H1 (cell line): ENCODE measurements at regions of chr2 and their contacts with region 1.

Region 1: GRCh38 chr2:200811336-200812121 is at the start of gene BZW1:
- DNase-seq: peak; percentile 90 to 95
- H3K4me3 ChIP-seq: peak within 1 kb of the TSS; percentile 86 to 99 (median 96)
- H3K27ac ChIP-seq: peak within 1 kb of the TSS; percentile 100
- H3K4me1 ChIP-seq: peaks cover 2 to 9% (median 5%) of the 10 kb centered on the region in 4 experiments; a peak in 6 of 7 replicates
- H3K27me3 ChIP-seq: no peaks in the 10 kb centered on the region
- CTCF ChIP-seq: no peak
- EP300 ChIP-seq: peak in 1 of 2 experiments; percentile 98; a peak in 2 of 3 replicates
- POLR2A ChIP-seq: peak; percentile 94 to 97
- RAD21 ChIP-seq: peak in 1 of 2 experiments; percentile 17; a peak in 1 of 4 replicates
- total RNA-seq, gene BZW1: 335 and 340 TPM in 2 replicates

Region 2: DNA sequence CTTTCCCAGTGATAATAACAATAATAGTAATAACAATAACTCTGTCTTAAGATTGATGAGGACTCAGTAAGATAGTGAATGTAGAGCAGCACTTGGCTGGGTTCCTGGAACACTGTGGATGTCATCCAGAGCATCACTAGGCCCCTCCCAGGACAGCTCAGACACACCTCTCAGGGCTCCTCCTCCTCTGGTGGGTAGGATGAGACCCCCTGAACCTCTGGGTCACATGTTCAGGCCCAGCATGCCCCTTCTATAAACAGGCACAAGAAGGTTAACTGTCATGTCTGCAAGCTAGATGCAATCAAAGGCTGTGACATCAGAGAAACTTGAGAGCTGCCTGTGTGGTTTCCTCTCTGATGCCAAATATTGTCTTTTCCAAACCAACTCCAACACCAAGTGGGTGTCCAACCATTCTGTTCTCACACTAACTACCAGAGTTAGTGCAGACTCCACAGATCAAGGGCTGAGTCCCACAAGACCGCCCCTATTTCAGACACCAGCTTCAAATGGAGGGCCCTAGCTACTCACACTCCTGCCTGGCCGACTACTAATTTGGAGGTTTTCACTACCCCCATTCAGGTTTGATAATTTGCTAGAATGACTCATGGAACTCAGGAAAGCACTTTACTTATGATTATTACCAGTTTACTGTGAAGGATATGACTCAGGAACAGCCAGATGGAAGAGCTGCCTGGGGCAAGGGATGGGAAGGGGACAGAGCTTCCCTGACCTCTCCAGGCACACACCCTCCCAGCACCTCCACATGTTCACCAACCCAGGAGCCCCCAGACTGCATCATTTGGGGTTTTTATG is 46.2 kb before region 1 on chr2:
- CTCF ChIA-PET with region 1: no interaction called
- POLR2A ChIA-PET with region 1: no interaction called
- DNase-seq: no peak
- H3K4me3 ChIP-seq: no peak overlapping the region
- H3K27ac ChIP-seq: no peak overlapping the region
- H3K4me1 ChIP-seq: no peaks in the 10 kb centered on the region
- H3K27me3 ChIP-seq: no peaks in the 10 kb centered on the region
- CTCF ChIP-seq: no peak
- EP300 ChIP-seq: no peak
- POLR2A ChIP-seq: no peak
- RAD21 ChIP-seq: no peak

Region 3: GRCh38 chr2:200829258-200829655 is 17.7 kb after region 1 on chr2:
- CTCF ChIA-PET with region 1: no interaction called
- POLR2A ChIA-PET with region 1: interaction called, 11 read pairs
- DNase-seq: no peak
- H3K4me3 ChIP-seq: no peak overlapping the region
- H3K27ac ChIP-seq: no peak overlapping the region
- H3K4me1 ChIP-seq: no peaks in the 10 kb centered on the region
- H3K27me3 ChIP-seq: no peaks in the 10 kb centered on the region
- CTCF ChIP-seq: no peak
- EP300 ChIP-seq: no peak
- POLR2A ChIP-seq: 0 out of 3 replicates have a peak, but pooled peaks of 1 of the 2 experiments have one; percentile 7
- RAD21 ChIP-seq: no peak

Region 4: DNA sequence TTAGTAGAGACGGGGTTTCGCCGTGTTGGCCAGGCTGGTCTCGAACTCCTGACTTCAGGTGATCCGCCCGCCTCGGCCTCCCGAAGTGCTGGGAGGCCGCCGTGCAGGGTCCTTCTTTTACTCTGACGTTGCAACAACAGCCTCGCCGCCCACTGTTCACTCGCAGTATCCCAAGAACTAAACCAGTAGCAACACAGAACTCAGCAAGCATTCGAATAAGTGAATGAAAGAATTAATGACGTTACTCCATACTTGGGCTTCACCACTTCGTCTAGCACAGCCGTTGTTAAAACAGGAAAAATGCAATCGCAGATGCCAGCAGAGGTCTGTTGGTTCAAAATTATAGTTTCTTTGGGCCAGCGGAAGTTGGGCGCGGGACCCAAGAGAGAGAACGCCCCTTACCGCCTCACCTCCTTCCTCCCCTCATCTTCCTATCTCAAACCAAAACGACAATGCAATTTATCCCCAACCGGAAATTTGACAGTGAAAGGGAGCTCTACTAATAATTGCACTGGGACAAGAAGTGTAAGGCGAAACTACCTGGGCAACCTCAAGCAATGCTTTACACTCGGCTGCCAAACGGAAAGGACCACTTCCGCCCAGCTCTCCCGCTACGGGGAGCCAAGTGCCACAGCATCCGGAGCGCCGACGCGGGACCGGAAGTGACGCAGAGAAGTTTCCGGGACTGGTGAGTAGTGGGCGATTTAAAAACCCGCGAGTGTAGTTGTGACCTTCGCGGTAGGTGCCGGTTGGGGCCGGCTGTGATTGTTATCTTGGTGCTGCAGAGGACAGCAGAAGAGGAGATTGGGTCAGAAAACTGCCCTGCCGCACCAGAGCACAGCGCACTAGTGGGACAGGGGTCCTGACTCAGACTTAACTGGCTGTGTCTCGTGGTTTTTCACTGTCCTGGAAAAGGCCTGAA is 77.4 kb after region 1 on chr2 and contains the starts of genes NIF3L1 and PPIL3:
- CTCF ChIA-PET with region 1: no interaction called
- POLR2A ChIA-PET with region 1: interaction called, 11 read pairs
- DNase-seq: peak; percentile 92 to 94
- H3K4me3 ChIP-seq: peak within 1 kb of the TSS; percentile 81 to 100 (median 93)
- H3K27ac ChIP-seq: peak within 1 kb of the TSS; percentile 97
- H3K4me1 ChIP-seq: no peaks in the 10 kb centered on the region
- H3K27me3 ChIP-seq: no peaks in the 10 kb centered on the region
- CTCF ChIP-seq: no peak
- EP300 ChIP-seq: peak in 1 of 2 experiments; percentile 70; a peak in 1 of 3 replicates
- POLR2A ChIP-seq: peak; percentile 82 to 85; a peak in 2 of 3 replicates
- RAD21 ChIP-seq: no peak
- total RNA-seq, gene NIF3L1: 63.4 and 65.1 TPM in 2 replicates
- total RNA-seq, gene PPIL3: 30.4 and 34.1 TPM in 2 replicates